Cardiac septum (tissue), 1 donor: ENCODE measurements at regions of chr11 and their contacts with region 1.

Region 1: GRCh38 chr11:119196833-119197483 is 9.2 kb upstream of the CBL start:
- DNase-seq: peak; percentile 55

Region 2: DNA sequence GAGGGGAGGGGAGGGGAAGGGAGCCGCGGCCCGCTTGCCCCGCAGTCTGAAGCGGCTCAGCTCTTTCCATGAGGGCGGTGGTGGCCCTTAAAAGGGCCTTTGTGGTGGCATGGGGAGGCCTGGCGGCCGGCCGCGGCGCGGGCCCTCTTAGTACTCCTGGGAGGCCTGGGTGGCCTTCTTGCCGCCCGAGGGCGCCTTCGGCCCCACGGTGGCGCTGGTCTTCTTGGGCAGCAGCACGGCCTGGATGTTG is 102.2 kb before region 1 on chr11:
- intact Hi-C with region 1: loop called (anchors 5 kb)
- DNase-seq: peak; percentile 93

Region 3: DNA sequence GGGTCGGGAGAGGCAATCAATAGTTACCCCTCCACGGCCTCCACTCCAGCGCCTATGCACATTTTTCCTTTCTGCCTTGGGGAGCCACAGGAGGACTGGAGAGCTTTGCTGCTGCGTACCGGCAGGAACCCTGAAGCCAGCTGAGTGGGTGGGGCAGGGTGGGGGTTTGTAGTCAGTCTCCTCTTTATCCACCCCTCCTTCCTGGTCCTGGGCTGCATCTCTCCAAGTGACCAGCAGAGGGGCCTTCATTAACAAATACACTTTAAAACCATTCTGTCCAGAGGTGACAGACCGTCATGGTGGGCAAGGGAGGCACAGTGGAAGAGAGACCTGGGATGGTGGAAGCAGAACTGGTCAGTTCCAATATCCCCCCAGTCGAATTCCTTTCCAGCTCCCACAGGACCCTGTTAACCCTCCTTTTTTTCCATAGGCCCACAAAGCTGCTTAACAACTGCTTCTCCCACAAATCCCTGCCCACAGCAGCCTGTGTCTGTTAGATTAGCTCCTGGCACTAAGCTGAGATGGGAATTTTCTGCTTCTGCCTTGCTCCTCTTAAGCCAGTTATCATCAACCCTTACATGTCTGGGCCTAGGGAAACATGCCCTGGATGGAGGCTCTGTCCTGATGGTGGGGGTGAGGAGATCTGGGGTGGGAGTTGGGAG is 52.0 kb before region 1 on chr11:
- intact Hi-C with region 1: loop called (anchors 5 kb)
- DNase-seq: no peak